ENCODE measurements at regions of chr3 and their contacts with region 1.

Region 1: DNA sequence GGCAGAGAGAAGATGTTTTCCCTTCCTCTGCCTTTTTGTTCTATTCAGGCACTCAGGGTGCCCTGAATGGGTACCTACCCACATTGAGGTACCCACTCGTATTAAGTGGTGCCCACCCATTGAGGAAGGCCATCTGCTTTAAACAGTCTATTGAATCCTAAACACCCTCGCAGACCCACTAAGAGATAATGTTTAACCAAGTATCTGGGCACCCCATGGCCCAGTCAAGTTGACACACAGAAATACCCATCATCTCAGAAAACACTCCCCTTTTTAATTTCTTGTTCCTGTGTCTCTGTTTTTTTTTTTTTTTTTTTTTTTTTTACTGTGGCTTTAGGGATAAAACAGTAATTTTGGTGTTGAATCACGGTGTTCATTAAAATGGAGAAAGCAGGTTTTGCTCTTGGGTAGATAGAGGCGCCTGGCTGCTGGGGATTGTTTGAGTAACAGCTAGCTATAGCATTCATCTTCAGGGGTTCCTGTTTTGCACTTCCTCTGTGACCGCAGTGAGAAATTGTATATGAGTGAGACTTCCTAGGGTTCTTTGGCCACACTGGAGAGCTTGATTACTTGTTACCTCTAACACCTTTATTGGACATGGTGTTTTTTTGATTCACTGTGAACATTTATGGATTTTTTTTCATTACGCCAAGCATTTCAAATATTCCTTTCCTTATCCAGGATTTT is 259.1 kb downstream of the PTPRG start:
- H3K4me3 ChIP-seq: no peak overlapping the region
- H3K27ac ChIP-seq: no peak overlapping the region
- H3K4me1 ChIP-seq: peaks cover 6% of the 10 kb centered on the region
- CTCF ChIP-seq: no peak

Region 2: DNA sequence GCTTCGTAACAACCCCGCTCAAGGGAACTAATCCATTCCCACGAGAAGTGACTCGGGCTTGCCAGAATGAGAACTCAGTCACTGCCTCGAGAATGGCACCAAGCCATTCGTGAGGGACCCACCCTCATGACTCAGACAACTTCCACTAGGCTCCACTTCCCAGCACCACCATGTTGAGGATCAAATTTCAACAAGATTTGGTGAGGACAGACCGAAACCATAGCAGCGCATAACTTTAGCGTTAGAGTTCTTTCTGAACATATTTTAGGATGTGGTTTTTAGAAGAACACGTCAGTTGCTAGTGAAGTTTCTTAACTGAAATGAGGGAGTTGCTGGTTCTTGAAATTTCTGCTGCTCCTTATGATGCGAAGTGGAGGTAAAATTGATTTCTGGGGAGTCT is 245.6 kb before region 1 on chr3:
- CTCF ChIA-PET with region 1: no interaction called
- POLR2A ChIA-PET with region 1: no interaction called
- H3K4me3 ChIP-seq: no peak overlapping the region
- H3K27ac ChIP-seq: no peak overlapping the region
- H3K4me1 ChIP-seq: 0 out of 2 replicates have a peak, but pooled peaks cover 6% of the 10 kb centered on the region
- CTCF ChIP-seq: no peak

Region 3: DNA sequence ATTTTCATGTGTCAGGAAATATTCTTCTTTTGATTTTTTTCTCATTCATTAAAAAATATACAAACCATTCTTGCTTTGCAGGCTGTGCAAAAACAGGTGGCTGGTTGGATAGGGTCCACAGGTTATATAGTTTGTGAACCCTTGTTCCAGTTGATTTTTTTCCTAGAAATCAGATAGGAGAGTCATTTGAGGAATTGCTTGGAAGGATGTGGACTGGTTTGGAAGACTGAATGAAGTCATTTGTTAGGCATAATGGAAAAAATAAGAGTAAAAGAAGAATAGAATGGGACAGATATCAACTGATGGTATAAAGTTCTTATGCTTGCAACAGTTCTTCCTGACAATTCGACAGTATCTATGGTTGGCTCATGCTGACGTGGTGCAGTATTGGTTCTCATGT is 69.7 kb before region 1 on chr3:
- CTCF ChIA-PET with region 1: interaction called, 3 read pairs
- POLR2A ChIA-PET with region 1: interaction called, 10 read pairs
- H3K4me3 ChIP-seq: no peak overlapping the region
- H3K27ac ChIP-seq: no peak overlapping the region
- H3K4me1 ChIP-seq: no peaks in the 10 kb centered on the region
- CTCF ChIP-seq: no peak

Region 4: GRCh38 chr3:61807865-61808276 is 12.6 kb before region 1 on chr3:
- CTCF ChIA-PET with region 1: no interaction called
- POLR2A ChIA-PET with region 1: no interaction called
- H3K4me3 ChIP-seq: no peak overlapping the region
- H3K27ac ChIP-seq: peak overlapping the region; percentile 51
- H3K4me1 ChIP-seq: peaks cover 36% of the 10 kb centered on the region
- CTCF ChIP-seq: no peak

Region 5: GRCh38 chr3:62142311-62143100 is 322.1 kb after region 1 on chr3:
- CTCF ChIA-PET with region 1: interaction called, 10 read pairs
- POLR2A ChIA-PET with region 1: no interaction called
- H3K4me3 ChIP-seq: no peak overlapping the region
- H3K27ac ChIP-seq: no peak overlapping the region
- H3K4me1 ChIP-seq: 0 out of 2 replicates have a peak, but pooled peaks cover 5% of the 10 kb centered on the region
- CTCF ChIP-seq: no peak